Kidney (tissue), 22 donors: ENCODE measurements at regions of chr1 and their contacts with region 1.

Region 1: GRCh38 chr1:235415008-235415904 is 48.0 kb downstream of the TBCE start:
- DNase-seq: peak in 4 of 5 donors; percentile 51 to 79 (median 64)
- H3K4me3 ChIP-seq: no peak overlapping the region
- H3K27ac ChIP-seq: no peak overlapping the region
- H3K4me1 ChIP-seq: peaks cover 0 to 7% (median 0%) of the 10 kb centered on the region in 3 donors
- H3K27me3 ChIP-seq: no peaks in the 10 kb centered on the region
- CTCF ChIP-seq: peak; percentile 64

Region 2: DNA sequence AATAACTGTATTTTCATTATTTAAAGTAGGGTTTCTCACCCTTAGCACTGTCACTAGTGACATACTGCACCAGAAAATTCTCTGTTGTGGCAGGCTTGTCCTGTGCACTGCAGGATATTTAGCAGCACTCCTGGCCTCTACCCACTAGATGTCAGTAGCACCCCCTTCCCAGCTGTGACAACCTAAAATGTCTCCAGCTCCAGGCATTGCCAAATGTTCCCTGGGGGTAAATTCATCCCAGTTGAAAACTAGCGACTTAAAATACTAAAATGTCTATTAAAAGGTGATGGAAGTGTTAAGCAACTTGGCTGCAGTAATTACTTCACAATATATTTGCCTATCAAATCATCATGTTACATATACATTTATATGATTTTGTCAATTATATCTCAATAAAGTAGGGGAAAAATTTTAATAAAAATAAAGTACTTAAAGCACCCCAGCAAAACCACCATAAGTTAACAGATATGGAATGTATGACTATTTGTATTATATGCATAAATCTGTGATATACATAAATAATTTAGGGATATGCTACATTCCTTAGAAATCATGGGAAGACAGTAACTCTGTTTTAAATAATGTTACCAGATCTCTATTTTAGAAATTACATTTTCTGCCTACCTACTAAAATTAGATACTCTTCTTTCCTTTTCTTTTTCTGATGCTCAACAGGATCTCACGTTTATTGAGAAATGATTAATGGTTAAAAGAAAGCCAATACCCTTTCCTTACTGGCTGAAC is 161.9 kb before region 1 on chr1:
- intact Hi-C with region 1: loop called (anchors 5 kb)
- DNase-seq: peak in 4 of 5 donors; percentile 59 to 84 (median 70)
- H3K4me3 ChIP-seq: no peak overlapping the region
- H3K27ac ChIP-seq: no peak overlapping the region
- H3K4me1 ChIP-seq: no peaks in the 10 kb centered on the region
- H3K27me3 ChIP-seq: no peaks in the 10 kb centered on the region
- CTCF ChIP-seq: peak; percentile 78

Region 3: GRCh38 chr1:235583511-235584001 is 168.3 kb after region 1 on chr1:
- intact Hi-C with region 1: no loop called
- DNase-seq: peak in 1 of 5 donors; percentile 18
- H3K4me3 ChIP-seq: no peak overlapping the region
- H3K27ac ChIP-seq: no peak overlapping the region
- H3K4me1 ChIP-seq: no peaks in the 10 kb centered on the region
- H3K27me3 ChIP-seq: no peaks in the 10 kb centered on the region
- CTCF ChIP-seq: no peak